Activated CD8-positive, alpha-beta T cell treated with anti-CD3 and anti-CD28 coated beads, Interleukin-2, amount 10 ng/mL, durations not matched to agents 7 days and 5 days (primary cell): ENCODE measurements at regions of chr2 and their contacts with region 1.

Region 1: GRCh38 chr2:112645310-112646101 is at the start of gene SLC20A1:
- DNase-seq: peak; percentile 97
- ATAC-seq: peak; percentile 94
- H3K4me3 Mint-ChIP-seq: peak within 1 kb of the TSS; percentile 92
- H3K27ac Mint-ChIP-seq: peak within 1 kb of the TSS; percentile 90
- H3K4me1 Mint-ChIP-seq: peaks cover 65% of the 10 kb centered on the region
- H3K27me3 Mint-ChIP-seq: peaks cover 3% of the 10 kb centered on the region
- total RNA-seq, gene SLC20A1: 115 to 120 TPM

Region 2: GRCh38 chr2:112539306-112539705 is 106.2 kb before region 1 on chr2:
- CTCF ChIA-PET with region 1: no interaction called
- POLR2A ChIA-PET with region 1: no interaction called
- DNase-seq: no peak
- ATAC-seq: no peak
- H3K4me3 Mint-ChIP-seq: no peak overlapping the region
- H3K27ac Mint-ChIP-seq: no peak overlapping the region
- H3K4me1 Mint-ChIP-seq: peaks cover 12% of the 10 kb centered on the region
- H3K27me3 Mint-ChIP-seq: no peaks in the 10 kb centered on the region

Region 3: DNA sequence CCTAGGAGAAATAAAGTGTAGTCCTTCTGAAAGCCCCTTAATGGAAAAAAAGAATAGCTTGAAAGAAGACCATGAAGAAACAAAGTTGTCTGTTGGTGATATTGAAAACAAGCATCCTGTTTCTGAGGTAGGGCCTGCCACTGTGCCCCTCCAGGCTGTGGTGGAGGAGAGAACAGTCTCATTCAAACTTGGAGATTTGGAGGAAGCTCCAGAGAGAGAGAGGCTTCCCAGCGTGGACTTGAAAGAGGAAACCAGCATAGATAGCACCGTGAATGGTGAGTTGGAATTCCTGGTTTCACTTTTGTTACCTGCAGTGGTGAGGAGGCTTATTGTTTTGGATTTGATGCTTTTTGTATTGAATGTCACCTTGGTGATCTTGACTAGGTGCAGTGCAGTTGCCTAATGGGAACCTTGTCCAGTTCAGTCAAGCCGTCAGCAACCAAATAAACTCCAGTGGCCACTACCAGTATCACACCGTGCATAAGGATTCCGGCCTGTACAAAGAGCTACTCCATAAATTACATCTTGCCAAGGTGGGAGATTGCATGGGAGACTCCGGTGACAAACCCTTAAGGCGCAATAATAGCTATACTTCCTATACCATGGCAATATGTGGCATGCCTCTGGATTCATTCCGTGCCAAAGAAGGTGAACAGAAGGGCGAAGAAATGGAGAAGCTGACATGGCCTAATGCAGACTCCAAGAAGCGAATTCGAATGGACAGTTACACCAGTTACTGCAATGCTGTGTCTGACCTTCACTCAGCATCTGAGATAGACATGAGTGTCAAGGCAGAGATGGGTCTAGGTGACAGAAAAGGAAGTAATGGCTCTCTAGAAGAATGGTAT is 13.5 kb after region 1 on chr2:
- CTCF ChIA-PET with region 1: interaction called, 15 read pairs
- POLR2A ChIA-PET with region 1: interaction called, 11 read pairs
- DNase-seq: no peak
- ATAC-seq: no peak
- H3K4me3 Mint-ChIP-seq: no peak overlapping the region
- H3K27ac Mint-ChIP-seq: no peak overlapping the region
- H3K4me1 Mint-ChIP-seq: peaks cover 50% of the 10 kb centered on the region
- H3K27me3 Mint-ChIP-seq: no peaks in the 10 kb centered on the region

Region 4: GRCh38 chr2:112706170-112706664 is 60.7 kb after region 1 on chr2:
- CTCF ChIA-PET with region 1: interaction called, 20 read pairs
- POLR2A ChIA-PET with region 1: no interaction called
- DNase-seq: peak; percentile 94
- ATAC-seq: peak; percentile 98
- H3K4me3 Mint-ChIP-seq: peak overlapping the region; percentile 58
- H3K27ac Mint-ChIP-seq: peak overlapping the region; percentile 71
- H3K4me1 Mint-ChIP-seq: peaks cover 41% of the 10 kb centered on the region
- H3K27me3 Mint-ChIP-seq: peaks cover 33% of the 10 kb centered on the region